CD14-positive monocyte (primary cell): ENCODE measurements at regions of chr12 and their contacts with region 1.

Region 1: DNA sequence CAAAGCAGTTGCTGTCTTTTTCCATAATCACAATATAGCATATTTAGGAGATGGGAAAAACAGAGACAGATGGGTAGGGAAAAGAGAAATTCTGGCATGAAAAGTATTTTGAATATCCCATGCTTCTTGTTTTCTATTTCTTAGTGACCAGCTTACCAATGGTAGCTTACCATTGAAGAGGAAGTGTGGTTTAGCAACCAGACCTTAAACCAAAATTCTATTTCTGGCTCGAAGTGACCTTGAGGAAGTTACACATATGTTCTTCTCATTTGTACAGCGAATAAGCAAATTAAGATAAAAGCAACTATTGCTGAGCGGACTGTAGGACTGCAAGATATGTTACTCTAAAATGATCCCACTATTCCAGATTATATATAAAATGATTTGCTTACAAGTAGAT is 82.9 kb downstream of the FGD4 start:
- DNase-seq: peak; percentile 77 to 94 (median 86)
- H3K4me3 ChIP-seq: peak overlapping the region in 1 of 3 experiments; percentile 66
- H3K4me3 Mint-ChIP-seq: peak overlapping the region; percentile 25 to 73
- H3K27ac ChIP-seq: peak overlapping the region; percentile 88 to 95
- H3K27ac Mint-ChIP-seq: peak overlapping the region; percentile 93 to 99 (median 98)
- H3K4me1 ChIP-seq: peaks cover 74 to 78% of the 10 kb centered on the region in 2 donors
- H3K4me1 Mint-ChIP-seq: peaks cover 56% of the 10 kb centered on the region
- H3K27me3 ChIP-seq: no peaks in the 10 kb centered on the region
- H3K27me3 Mint-ChIP-seq: no peaks in the 10 kb centered on the region
- CTCF ChIP-seq: no peak

Region 2: GRCh38 chr12:31715283-31715825 is 766.9 kb before region 1 on chr12:
- intact Hi-C with region 1: no loop called
- DNase-seq: peak; percentile 84 to 95 (median 87)
- H3K4me3 ChIP-seq: peak overlapping the region; percentile 15 to 62 (median 56)
- H3K4me3 Mint-ChIP-seq: peak overlapping the region; percentile 55 to 84
- H3K27ac ChIP-seq: peak overlapping the region; percentile 45 to 94
- H3K27ac Mint-ChIP-seq: peak overlapping the region; percentile 95 to 98 (median 97)
- H3K4me1 ChIP-seq: peaks cover 7 to 29% of the 10 kb centered on the region in 2 donors
- H3K4me1 Mint-ChIP-seq: peaks cover 36% of the 10 kb centered on the region
- H3K27me3 ChIP-seq: no peaks in the 10 kb centered on the region
- H3K27me3 Mint-ChIP-seq: no peaks in the 10 kb centered on the region
- CTCF ChIP-seq: no peak

Region 3: DNA sequence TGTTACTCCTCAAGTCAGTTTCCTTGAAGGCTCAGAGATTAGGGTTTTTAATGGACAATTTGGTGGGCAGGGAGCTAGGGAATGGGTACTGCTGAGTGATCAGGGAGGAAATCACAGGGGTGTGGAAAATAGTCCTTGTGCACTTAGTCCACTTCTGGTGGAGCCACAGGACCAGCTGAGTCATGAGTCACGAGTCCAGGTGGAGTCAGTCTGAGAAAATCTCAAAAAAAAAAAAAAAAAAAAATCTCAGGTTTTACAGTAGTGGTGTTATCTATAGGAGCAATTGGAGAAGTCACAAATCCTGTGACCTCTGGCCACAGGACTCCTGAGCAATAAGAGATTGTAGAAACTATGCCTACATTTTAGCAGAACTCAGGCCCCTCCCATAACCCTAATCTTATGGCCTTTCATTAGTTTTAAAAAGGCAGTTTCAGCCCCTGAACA is 725.2 kb before region 1 on chr12:
- intact Hi-C with region 1: loop called in 1 of 2 experiments (anchors 10 kb)
- DNase-seq: peak; percentile 21 to 62 (median 47)
- H3K4me3 ChIP-seq: no peak overlapping the region
- H3K4me3 Mint-ChIP-seq: no peak overlapping the region
- H3K27ac ChIP-seq: no peak overlapping the region
- H3K27ac Mint-ChIP-seq: peak overlapping the region in 3 of 7 donors; percentile 58 to 77 (median 66)
- H3K4me1 ChIP-seq: peaks cover 11 to 28% of the 10 kb centered on the region in 2 donors
- H3K4me1 Mint-ChIP-seq: peaks cover 24% of the 10 kb centered on the region
- H3K27me3 ChIP-seq: no peaks in the 10 kb centered on the region
- H3K27me3 Mint-ChIP-seq: no peaks in the 10 kb centered on the region
- CTCF ChIP-seq: no peak

Region 4: GRCh38 chr12:32290411-32290810 is 191.8 kb before region 1 on chr12:
- intact Hi-C with region 1: no loop called
- DNase-seq: no peak
- H3K4me3 ChIP-seq: no peak overlapping the region
- H3K4me3 Mint-ChIP-seq: no peak overlapping the region
- H3K27ac ChIP-seq: no peak overlapping the region
- H3K27ac Mint-ChIP-seq: no peak overlapping the region
- H3K4me1 ChIP-seq: peaks cover 0 to 9% of the 10 kb centered on the region in 2 donors
- H3K4me1 Mint-ChIP-seq: peaks cover 8% of the 10 kb centered on the region
- H3K27me3 ChIP-seq: no peaks in the 10 kb centered on the region
- H3K27me3 Mint-ChIP-seq: peaks cover 0 to 3% (median 0%) of the 10 kb centered on the region in 3 donors
- CTCF ChIP-seq: no peak

Region 5: DNA sequence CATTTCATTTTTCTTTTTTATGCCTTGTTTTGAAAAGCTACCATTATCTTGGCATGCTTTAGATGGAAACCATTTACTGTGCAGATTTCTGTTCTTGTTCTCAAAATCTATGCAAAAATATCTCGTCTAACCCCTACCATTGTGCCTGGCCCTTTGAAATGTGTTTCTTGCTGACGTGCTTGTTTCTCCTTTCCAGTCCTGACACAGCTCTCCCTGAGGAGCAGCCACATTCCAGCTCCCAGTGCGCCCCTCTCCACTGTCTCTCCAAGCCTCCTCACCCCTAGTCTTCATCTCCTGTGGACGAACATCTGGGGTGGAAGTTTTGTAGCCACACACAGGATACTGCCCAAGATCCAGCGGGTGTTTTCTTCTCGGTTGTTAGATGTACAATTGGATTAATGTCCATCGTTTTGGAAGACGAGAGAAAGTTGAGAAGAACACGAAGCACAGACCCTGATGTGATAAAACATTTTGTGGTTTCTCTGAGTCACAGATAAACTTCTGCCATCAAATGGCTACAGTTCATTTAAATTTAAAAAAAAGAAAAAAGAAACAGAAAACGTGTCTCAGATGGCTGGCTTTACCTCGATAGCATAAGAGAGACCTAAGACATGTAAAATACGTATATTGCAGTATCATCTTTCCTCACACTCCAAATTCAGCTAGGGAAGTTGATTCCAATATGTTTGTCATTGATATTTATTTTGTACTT is 104.7 kb before region 1 on chr12:
- intact Hi-C with region 1: loop called in 1 of 2 experiments (anchors 10 kb)
- DNase-seq: no peak
- H3K4me3 ChIP-seq: no peak overlapping the region
- H3K4me3 Mint-ChIP-seq: no peak overlapping the region
- H3K27ac ChIP-seq: no peak overlapping the region
- H3K27ac Mint-ChIP-seq: no peak overlapping the region
- H3K4me1 ChIP-seq: peaks cover 10 to 13% of the 10 kb centered on the region in 2 donors
- H3K4me1 Mint-ChIP-seq: peaks cover 15% of the 10 kb centered on the region
- H3K27me3 ChIP-seq: no peaks in the 10 kb centered on the region
- H3K27me3 Mint-ChIP-seq: no peaks in the 10 kb centered on the region
- CTCF ChIP-seq: no peak

Region 6: GRCh38 chr12:32522331-32523221 is 40.4 kb after region 1 on chr12:
- intact Hi-C with region 1: loop called (anchors 5 kb)
- DNase-seq: peak; percentile 47 to 80 (median 60)
- H3K4me3 ChIP-seq: peak overlapping the region in 2 of 3 experiments; percentile 30 to 56
- H3K4me3 Mint-ChIP-seq: peak overlapping the region; percentile 47 to 84
- H3K27ac ChIP-seq: peak overlapping the region; percentile 72 to 82
- H3K27ac Mint-ChIP-seq: peak overlapping the region; percentile 91 to 97 (median 96)
- H3K4me1 ChIP-seq: peaks cover 38 to 40% of the 10 kb centered on the region in 2 donors
- H3K4me1 Mint-ChIP-seq: peaks cover 40% of the 10 kb centered on the region
- H3K27me3 ChIP-seq: no peaks in the 10 kb centered on the region
- H3K27me3 Mint-ChIP-seq: peaks cover 0 to 2% (median 1%) of the 10 kb centered on the region in 3 donors
- CTCF ChIP-seq: no peak

Region 7: GRCh38 chr12:32860182-32860581 is 378.0 kb after region 1 on chr12:
- intact Hi-C with region 1: no loop called
- DNase-seq: no peak
- H3K4me3 ChIP-seq: no peak overlapping the region
- H3K4me3 Mint-ChIP-seq: no peak overlapping the region
- H3K27ac ChIP-seq: no peak overlapping the region
- H3K27ac Mint-ChIP-seq: peak overlapping the region in 1 of 7 donors; percentile 43
- H3K4me1 ChIP-seq: no peaks in the 10 kb centered on the region
- H3K4me1 Mint-ChIP-seq: no peaks in the 10 kb centered on the region
- H3K27me3 ChIP-seq: no peaks in the 10 kb centered on the region
- H3K27me3 Mint-ChIP-seq: peaks cover 0 to 2% (median 0%) of the 10 kb centered on the region in 3 donors
- CTCF ChIP-seq: no peak